B cell (primary cell): ENCODE measurements at regions of chr1 and their contacts with region 1.

Region 1: GRCh38 chr1:9910425-9911178 is 533 bp upstream of the CTNNBIP1 start:
- DNase-seq: peak; percentile 99
- ATAC-seq: peak; percentile 89
- H3K4me3 ChIP-seq: peak overlapping the region; percentile 65 to 96 (median 91)
- H3K4me3 Mint-ChIP-seq: peak overlapping the region; percentile 99
- H3K27ac ChIP-seq: peak overlapping the region; percentile 56 to 67
- H3K27ac Mint-ChIP-seq: peak overlapping the region; percentile 99
- H3K4me1 ChIP-seq: peaks cover 10 to 18% of the 10 kb centered on the region in 2 donors
- H3K4me1 Mint-ChIP-seq: peaks cover 30% of the 10 kb centered on the region
- H3K27me3 ChIP-seq: no peaks in the 10 kb centered on the region
- H3K27me3 Mint-ChIP-seq: no peaks in the 10 kb centered on the region
- CTCF ChIP-seq: no peak

Region 2: DNA sequence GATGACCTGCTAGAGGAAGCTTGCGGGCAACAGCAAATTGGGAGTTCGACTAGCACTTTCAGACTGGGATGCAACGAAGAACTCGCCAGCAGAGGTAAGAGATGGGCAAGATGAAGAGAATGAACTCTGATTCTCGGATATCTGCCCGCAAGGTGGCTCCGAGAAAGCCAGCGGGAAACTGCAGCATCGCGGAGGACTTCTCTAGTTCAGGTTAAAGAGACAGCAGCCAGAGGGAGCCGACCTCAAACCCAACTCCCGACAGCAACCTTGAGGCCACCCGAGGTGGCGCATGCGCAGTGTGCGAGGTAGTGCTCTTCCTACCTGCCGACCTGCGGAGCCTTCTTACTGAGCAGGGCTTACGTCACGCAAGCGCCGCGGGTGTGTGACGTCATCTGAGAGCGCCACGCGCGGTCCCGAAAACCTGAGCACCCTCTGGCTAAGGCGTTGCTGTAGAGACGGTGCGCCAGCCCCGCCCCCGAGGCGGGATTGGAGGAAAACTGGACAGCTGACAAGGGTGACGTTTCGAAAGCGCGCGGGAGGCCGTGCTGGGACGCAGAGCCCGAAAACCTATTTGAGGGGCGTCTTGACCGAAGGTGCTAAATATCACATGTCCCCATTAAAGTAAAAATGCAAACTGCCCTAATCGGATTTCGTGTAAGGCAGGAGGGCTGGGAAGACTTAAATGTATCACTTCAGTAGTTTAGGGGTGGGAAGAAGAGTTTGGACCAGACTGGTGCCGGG is 481.8 kb before region 1 on chr1:
- CTCF ChIA-PET with region 1: no interaction called
- POLR2A ChIA-PET with region 1: no interaction called
- intact Hi-C with region 1: loop called (anchors 5 kb)
- DNase-seq: peak; percentile 100
- ATAC-seq: peak; percentile 74
- H3K4me3 ChIP-seq: peak overlapping the region; percentile 58 to 91 (median 77)
- H3K4me3 Mint-ChIP-seq: peak overlapping the region; percentile 99
- H3K27ac ChIP-seq: peak overlapping the region; percentile 74 to 85
- H3K27ac Mint-ChIP-seq: peak overlapping the region; percentile 98
- H3K4me1 ChIP-seq: peaks cover 48 to 56% of the 10 kb centered on the region in 2 donors
- H3K4me1 Mint-ChIP-seq: peaks cover 54% of the 10 kb centered on the region
- H3K27me3 ChIP-seq: no peaks in the 10 kb centered on the region
- H3K27me3 Mint-ChIP-seq: no peaks in the 10 kb centered on the region
- CTCF ChIP-seq: peak; percentile 19

Region 3: DNA sequence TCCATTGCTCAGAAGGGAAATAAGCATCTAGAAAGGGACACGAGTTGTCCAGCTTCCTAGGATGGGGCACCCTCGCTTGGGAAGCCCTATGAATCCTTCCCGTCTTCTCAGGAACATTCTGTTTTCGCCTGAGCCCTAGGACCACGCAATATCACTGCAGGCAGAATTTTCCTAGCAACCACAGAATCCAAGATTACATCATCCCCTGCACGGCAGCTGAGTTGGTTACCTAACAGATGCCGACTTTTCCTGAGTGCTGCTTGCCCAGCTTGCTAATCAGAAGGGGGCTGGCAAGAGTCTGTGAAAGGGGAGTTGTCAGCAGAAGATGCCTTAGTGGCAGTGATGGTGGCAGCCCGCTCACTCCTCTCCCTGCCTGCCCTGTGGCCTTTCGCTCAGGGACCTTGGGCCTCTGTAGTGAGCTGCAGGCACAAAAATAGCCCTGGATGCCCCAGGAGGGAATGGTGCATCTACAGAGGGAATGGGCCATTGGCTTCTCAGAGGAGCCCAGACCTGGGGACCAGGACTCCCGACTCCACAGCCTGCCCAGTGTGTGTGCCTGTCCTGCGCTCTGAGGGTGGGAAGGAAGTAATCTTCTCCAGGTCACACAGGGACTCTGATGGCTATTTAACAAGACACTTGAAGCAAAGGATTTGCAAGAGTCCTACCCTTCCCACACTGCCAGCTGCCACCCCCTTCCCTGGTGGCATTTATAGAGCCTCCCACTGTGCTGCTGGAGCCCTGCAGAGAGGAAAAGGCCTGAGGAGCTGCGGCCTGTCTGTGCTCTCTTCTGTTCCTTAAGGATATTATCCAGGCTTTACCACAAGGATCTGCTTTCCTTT is 58.0 kb before region 1 on chr1:
- CTCF ChIA-PET with region 1: no interaction called
- POLR2A ChIA-PET with region 1: no interaction called
- intact Hi-C with region 1: loop called (anchors 1 kb)
- DNase-seq: no peak
- ATAC-seq: no peak
- H3K4me3 ChIP-seq: no peak overlapping the region
- H3K4me3 Mint-ChIP-seq: no peak overlapping the region
- H3K27ac ChIP-seq: no peak overlapping the region
- H3K27ac Mint-ChIP-seq: no peak overlapping the region
- H3K4me1 ChIP-seq: peaks cover 21 to 36% of the 10 kb centered on the region in 2 donors
- H3K4me1 Mint-ChIP-seq: peaks cover 26% of the 10 kb centered on the region
- H3K27me3 ChIP-seq: no peaks in the 10 kb centered on the region
- H3K27me3 Mint-ChIP-seq: no peaks in the 10 kb centered on the region
- CTCF ChIP-seq: no peak

Region 4: GRCh38 chr1:9881838-9882249 is 28.8 kb before region 1 on chr1:
- CTCF ChIA-PET with region 1: no interaction called
- POLR2A ChIA-PET with region 1: no interaction called
- intact Hi-C with region 1: no loop called
- DNase-seq: no peak
- ATAC-seq: no peak
- H3K4me3 ChIP-seq: no peak overlapping the region
- H3K4me3 Mint-ChIP-seq: no peak overlapping the region
- H3K27ac ChIP-seq: no peak overlapping the region
- H3K27ac Mint-ChIP-seq: no peak overlapping the region
- H3K4me1 ChIP-seq: no peaks in the 10 kb centered on the region
- H3K4me1 Mint-ChIP-seq: peaks cover 2% of the 10 kb centered on the region
- H3K27me3 ChIP-seq: no peaks in the 10 kb centered on the region
- H3K27me3 Mint-ChIP-seq: no peaks in the 10 kb centered on the region
- CTCF ChIP-seq: no peak

Region 5: GRCh38 chr1:9900142-9901043 is 10.2 kb before region 1 on chr1:
- CTCF ChIA-PET with region 1: no interaction called
- POLR2A ChIA-PET with region 1: interaction called, 3 read pairs
- intact Hi-C with region 1: loop called (anchors 1 kb)
- DNase-seq: peak; percentile 78
- ATAC-seq: peak; percentile 95
- H3K4me3 ChIP-seq: peak overlapping the region in 4 of 5 experiments; percentile 29 to 46 (median 40)
- H3K4me3 Mint-ChIP-seq: peak overlapping the region; percentile 89
- H3K27ac ChIP-seq: peak overlapping the region; percentile 38 to 39
- H3K27ac Mint-ChIP-seq: peak overlapping the region; percentile 92
- H3K4me1 ChIP-seq: peaks cover 12 to 16% of the 10 kb centered on the region in 2 donors
- H3K4me1 Mint-ChIP-seq: peaks cover 16% of the 10 kb centered on the region
- H3K27me3 ChIP-seq: no peaks in the 10 kb centered on the region
- H3K27me3 Mint-ChIP-seq: no peaks in the 10 kb centered on the region
- CTCF ChIP-seq: no peak

Region 6: DNA sequence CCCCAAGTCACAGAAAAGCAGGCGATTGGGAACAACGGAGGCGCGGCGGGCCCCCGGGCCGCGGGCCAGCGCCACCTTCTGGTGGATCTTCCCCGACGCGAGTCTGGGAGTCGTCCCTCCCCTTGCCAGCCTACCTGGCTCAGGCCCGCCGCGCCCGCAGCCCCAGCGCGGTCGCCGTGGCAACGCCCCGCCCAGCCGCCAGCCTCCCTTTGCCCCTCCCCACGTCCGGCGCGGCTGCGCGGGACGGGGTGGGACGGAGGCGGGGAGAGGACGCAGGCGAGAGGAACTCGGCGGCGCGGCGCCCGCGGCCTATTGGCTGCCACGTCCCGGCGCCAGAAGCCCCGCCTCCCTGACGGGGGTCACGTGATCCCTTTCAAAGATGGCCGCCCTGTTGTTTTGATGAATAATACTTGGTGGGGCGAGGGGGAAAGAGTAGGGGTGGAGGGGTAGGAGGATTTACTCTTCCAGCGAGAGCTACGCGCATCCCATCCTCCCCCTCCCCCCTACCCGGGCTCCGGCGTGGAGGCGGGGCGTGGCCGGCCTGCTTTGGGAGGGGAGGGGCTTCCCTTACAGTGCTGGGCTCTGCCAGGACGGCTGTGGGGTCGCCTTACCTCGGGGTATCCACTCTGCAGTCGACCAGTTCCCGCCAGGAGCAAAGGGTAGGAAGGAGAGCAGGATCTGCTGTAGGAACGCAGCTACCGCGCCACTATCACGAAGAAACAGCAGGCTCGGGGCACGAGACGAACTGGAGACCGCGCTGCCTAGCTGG is 122.2 kb after region 1 on chr1 and contains the start of gene UBE4B:
- CTCF ChIA-PET with region 1: no interaction called
- POLR2A ChIA-PET with region 1: no interaction called
- intact Hi-C with region 1: loop called (anchors 1 kb)
- DNase-seq: peak; percentile 99
- ATAC-seq: peak; percentile 94
- H3K4me3 ChIP-seq: peak within 1 kb of the TSS; percentile 70 to 93 (median 89)
- H3K4me3 Mint-ChIP-seq: peak within 1 kb of the TSS; percentile 99
- H3K27ac ChIP-seq: peak within 1 kb of the TSS; percentile 73 to 84
- H3K27ac Mint-ChIP-seq: peak within 1 kb of the TSS; percentile 96
- H3K4me1 ChIP-seq: peaks cover 18 to 19% of the 10 kb centered on the region in 2 donors
- H3K4me1 Mint-ChIP-seq: peaks cover 23% of the 10 kb centered on the region
- H3K27me3 ChIP-seq: no peaks in the 10 kb centered on the region
- H3K27me3 Mint-ChIP-seq: no peaks in the 10 kb centered on the region
- CTCF ChIP-seq: peak; percentile 89
- total RNA-seq, gene UBE4B: 57.5 and 59.0 TPM in 2 replicates

Region 7: DNA sequence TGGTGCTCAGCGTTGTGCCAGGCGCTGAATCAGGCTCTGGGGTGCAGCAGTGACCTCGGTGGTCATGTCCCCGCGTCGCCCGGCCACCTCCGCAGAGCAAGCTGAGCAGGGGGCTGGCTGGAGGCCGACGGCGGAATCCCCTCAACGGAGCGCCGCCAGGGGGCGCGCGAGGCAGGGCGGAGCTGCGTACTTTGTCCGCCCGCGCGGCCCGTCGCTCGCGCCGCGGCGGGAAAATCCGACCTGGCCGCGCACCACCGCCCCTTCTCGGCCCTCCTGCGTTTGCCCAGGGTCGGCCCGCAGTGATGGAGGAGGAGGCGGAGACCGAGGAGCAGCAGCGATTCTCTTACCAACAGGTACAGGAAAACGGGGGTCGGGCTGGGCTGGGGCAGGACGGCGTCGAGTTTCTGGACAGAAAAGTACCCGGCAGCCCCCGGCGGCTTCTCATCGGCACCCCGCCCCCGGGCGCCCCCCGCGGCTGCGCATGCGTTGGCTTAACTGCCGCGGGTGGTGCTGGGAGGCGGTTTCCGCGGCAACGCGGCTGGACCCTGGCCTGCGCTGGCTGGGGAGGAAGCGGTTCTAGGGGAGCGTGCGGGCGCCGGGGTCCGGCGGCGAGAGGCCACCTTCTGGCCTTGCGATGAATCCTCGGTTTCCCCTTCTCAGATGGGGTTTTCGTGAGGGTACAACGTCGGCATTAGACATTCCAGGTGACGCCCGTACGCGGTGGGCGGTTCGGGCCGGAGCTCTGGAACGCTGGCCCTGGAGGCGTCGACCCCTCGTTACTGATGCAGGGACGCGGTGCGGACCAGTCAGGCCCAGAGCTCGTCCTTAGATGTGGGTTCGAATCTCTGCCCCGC is 519.8 kb after region 1 on chr1 and contains the start of gene CENPS:
- CTCF ChIA-PET with region 1: no interaction called
- POLR2A ChIA-PET with region 1: no interaction called
- intact Hi-C with region 1: loop called (anchors 1 kb)
- DNase-seq: peak; percentile 96
- ATAC-seq: peak; percentile 84
- H3K4me3 ChIP-seq: peak within 1 kb of the TSS; percentile 42 to 98 (median 89)
- H3K4me3 Mint-ChIP-seq: peak within 1 kb of the TSS; percentile 96
- H3K27ac ChIP-seq: peak within 1 kb of the TSS; percentile 82 to 95
- H3K27ac Mint-ChIP-seq: peak within 1 kb of the TSS; percentile 99
- H3K4me1 ChIP-seq: peaks cover 11 to 30% of the 10 kb centered on the region in 2 donors
- H3K4me1 Mint-ChIP-seq: peaks cover 30% of the 10 kb centered on the region
- H3K27me3 ChIP-seq: no peaks in the 10 kb centered on the region
- H3K27me3 Mint-ChIP-seq: no peaks in the 10 kb centered on the region
- CTCF ChIP-seq: peak; percentile 97
- total RNA-seq, gene CENPS: 7.2 and 10.9 TPM in 2 replicates

Region 8: GRCh38 chr1:10694633-10695627 is 784.3 kb after region 1 on chr1:
- CTCF ChIA-PET with region 1: no interaction called
- POLR2A ChIA-PET with region 1: no interaction called
- intact Hi-C with region 1: loop called (anchors 5 kb)
- DNase-seq: peak; percentile 92
- ATAC-seq: peak; percentile 73
- H3K4me3 ChIP-seq: peak overlapping the region in 4 of 5 experiments; percentile 24 to 63 (median 50)
- H3K4me3 Mint-ChIP-seq: peak overlapping the region; percentile 87
- H3K27ac ChIP-seq: peak overlapping the region in 1 of 2 donors; percentile 68
- H3K27ac Mint-ChIP-seq: peak overlapping the region; percentile 85
- H3K4me1 ChIP-seq: peaks cover 16 to 24% of the 10 kb centered on the region in 2 donors
- H3K4me1 Mint-ChIP-seq: peaks cover 19% of the 10 kb centered on the region
- H3K27me3 ChIP-seq: no peaks in the 10 kb centered on the region
- H3K27me3 Mint-ChIP-seq: peaks cover 8% of the 10 kb centered on the region
- CTCF ChIP-seq: no peak